Activated CD4-positive, alpha-beta memory T cell treated with anti-CD3 and anti-CD28 coated beads, Interleukin-2, amount 10 ng/mL, durations not matched to agents 7 days and 5 days (primary cell): ENCODE measurements at regions of chr2 and their contacts with region 1.

Region 1: DNA sequence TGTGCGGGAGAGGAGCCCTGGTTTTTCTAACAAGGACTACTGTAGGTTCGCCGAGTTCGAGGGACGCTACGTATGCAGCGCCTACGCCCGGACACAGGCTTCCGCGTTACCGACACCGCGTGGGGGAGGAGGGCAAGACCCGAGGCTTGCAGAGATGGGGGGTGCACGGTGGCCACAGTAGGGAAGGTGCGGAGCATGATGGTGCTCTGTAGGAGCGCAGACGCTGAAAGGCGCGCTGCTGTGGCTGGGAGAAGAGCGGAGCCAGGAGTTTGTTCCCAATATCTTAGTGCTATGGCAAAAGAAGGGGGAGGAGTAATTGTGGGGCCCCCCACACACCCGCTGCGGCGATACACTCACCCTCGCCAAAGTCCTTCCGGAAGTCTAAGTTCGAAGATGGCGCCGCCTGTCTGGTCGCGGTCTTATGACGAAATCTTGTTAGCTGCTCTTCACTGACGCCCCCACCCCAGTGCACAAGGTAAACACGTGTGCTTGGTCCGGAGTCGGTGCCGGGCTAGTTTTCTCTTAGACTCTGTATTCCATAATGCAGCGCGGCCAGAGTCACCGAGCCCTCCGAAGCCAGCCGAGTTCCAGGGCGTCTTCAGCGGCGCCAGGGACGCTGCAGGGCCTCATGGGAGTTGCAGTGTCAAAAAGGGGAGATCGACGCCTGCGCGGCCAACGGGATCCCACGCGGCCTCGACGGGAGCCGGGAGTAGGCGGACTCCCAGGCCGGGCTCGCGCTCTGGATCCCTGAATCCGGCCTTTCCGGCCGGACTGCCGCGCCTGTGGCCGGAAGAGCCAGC is at the start of gene GTF3C2:
- DNase-seq: peak; percentile 93
- H3K4me3 Mint-ChIP-seq: peak within 1 kb of the TSS; percentile 95
- H3K27ac Mint-ChIP-seq: peak within 1 kb of the TSS; percentile 97
- H3K4me1 Mint-ChIP-seq: peaks cover 50% of the 10 kb centered on the region
- H3K27me3 Mint-ChIP-seq: no peaks in the 10 kb centered on the region
- total RNA-seq, gene GTF3C2: 49.0 to 49.1 TPM

Region 2: DNA sequence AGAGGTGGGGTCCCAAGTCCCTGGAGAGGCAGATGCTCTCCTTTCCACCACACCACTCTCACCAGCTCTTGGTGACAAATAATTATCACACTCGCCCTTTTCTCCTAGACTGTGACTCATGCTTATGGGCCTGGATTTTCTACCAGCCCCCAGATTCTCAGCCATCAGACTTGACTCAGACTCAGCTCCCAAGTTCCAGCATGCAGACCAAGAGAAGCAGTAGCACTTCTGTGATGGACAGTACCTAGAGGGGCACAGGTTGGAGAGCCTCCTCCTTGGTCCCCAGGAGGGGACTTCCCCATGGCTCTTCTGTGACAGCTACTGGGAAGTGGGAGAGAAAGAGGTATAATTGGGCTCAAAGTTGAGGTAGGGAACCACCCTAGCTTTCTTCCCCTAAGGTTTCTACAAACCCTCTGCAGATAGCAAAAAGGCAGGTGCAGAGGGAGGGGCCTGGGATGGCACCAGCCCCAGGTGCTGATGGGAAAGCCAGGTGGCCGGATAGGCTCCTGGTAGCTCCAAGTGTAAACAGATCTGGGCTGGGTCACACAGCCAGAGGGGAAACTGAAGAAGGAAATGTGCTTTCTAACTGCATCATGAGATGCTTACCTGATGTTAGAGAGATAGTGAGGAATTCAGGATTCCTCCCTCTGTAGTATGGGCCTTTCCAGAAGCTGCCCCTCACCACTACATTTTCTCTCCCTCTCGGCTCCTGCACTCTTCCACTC is 203.6 kb before region 1 on chr2:
- CTCF ChIA-PET with region 1: no interaction called
- POLR2A ChIA-PET with region 1: no interaction called
- DNase-seq: no peak
- H3K4me3 Mint-ChIP-seq: no peak overlapping the region
- H3K27ac Mint-ChIP-seq: no peak overlapping the region
- H3K4me1 Mint-ChIP-seq: no peaks in the 10 kb centered on the region
- H3K27me3 Mint-ChIP-seq: no peaks in the 10 kb centered on the region

Region 3: GRCh38 chr2:27284996-27285395 is 71.6 kb before region 1 on chr2:
- CTCF ChIA-PET with region 1: no interaction called
- POLR2A ChIA-PET with region 1: no interaction called
- DNase-seq: no peak
- H3K4me3 Mint-ChIP-seq: no peak overlapping the region
- H3K27ac Mint-ChIP-seq: no peak overlapping the region
- H3K4me1 Mint-ChIP-seq: peaks cover 8% of the 10 kb centered on the region
- H3K27me3 Mint-ChIP-seq: peaks cover 57% of the 10 kb centered on the region

Region 4: DNA sequence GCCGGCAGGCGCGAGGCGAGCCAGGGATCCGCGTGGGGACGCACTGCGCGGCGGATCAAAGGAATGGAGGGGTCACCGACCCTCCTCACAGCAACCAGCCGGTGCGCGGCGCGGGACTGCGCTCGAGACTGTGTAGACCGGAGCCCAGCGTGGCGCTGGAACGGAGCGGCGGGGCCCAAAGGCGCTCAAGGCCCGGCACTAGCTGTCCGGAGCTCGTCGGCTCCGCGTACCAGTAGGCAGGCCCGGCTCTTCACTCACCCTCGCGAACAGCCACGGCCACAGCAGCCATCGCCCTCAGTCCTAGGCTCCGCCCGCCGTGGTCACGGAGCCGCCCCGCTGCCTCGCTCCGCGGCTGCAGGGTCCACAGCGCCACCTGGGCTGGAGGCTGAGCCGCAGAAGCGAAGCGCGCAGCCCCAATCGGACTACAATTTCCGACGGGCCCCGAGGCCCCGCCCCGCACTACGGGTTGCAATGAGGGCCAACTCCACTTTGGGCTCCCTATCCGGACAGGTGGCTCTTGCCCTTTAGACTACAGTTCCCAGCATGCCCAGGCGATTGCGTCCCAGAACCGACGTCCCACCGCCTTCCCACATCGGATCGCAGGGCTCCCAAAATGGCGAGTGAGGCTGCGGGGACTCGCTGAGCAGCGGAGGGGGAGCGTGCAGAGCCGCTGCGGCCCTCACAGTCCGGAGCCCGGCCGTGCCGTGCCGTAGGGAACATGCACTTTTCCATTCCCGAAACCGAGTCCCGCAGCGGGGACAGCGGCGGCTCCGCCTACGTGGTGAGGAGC is 13.6 kb after region 1 on chr2 and contains the starts of genes EIF2B4 and SNX17:
- CTCF ChIA-PET with region 1: interaction called, 16 read pairs
- POLR2A ChIA-PET with region 1: interaction called, 67 read pairs
- DNase-seq: peak; percentile 100
- H3K4me3 Mint-ChIP-seq: peak within 1 kb of the TSS; percentile 88
- H3K27ac Mint-ChIP-seq: peak within 1 kb of the TSS; percentile 93
- H3K4me1 Mint-ChIP-seq: peaks cover 45% of the 10 kb centered on the region
- H3K27me3 Mint-ChIP-seq: no peaks in the 10 kb centered on the region
- total RNA-seq, gene EIF2B4: 34.1 to 36.9 TPM
- total RNA-seq, gene SNX17: 116 to 123 TPM

Region 5: DNA sequence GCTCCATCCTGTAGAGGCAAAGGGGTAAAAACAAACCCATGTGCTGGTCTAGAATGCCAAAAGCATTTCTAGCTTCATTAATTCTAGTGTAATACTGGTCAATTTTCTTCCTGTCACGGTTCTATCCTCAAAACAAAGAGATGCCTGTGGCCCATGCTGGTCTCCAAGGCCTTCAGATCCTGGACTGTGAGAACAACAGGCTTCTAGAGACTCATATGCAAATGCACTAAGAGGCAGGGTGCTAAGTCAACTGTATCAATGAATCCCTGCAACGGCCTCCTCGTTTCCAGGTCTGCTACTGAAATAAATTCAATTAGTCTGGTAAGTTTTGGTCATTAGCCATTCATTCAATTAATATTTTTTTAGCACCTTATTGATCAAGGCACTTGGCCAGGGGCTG is 128.9 kb after region 1 on chr2:
- CTCF ChIA-PET with region 1: no interaction called
- POLR2A ChIA-PET with region 1: no interaction called
- DNase-seq: no peak
- H3K4me3 Mint-ChIP-seq: no peak overlapping the region
- H3K27ac Mint-ChIP-seq: no peak overlapping the region
- H3K4me1 Mint-ChIP-seq: peaks cover 19% of the 10 kb centered on the region
- H3K27me3 Mint-ChIP-seq: no peaks in the 10 kb centered on the region